ENCODE measurements at regions of chr1 and their contacts with region 1.

Region 1: GRCh38 chr1:219173758-219174588 is at the start of gene LYPLAL1:
- DNase-seq: peak; percentile 96
- total RNA-seq, gene LYPLAL1: 99.4 TPM

Region 2: DNA sequence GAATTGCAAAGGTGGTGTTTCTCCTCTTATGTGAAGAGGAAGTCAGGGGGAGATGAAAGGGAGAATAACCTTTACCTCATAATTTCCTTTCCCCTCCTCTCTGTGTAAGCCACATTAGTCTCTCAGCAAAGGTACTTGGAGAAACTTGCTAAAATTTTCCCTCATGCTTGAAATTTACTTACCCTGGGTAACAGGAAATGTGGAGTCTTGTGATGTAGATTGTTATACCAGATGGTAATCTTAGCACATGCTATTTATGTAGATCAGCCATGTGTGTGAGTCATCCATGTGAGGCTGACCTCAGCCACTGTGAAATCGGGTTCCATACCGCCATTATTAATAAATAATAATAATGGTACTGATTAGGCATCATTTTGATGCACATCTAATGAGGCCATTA is 700.5 kb before region 1 on chr1:
- intact Hi-C with region 1: loop called (anchors 10 kb)
- DNase-seq: no peak

Region 3: DNA sequence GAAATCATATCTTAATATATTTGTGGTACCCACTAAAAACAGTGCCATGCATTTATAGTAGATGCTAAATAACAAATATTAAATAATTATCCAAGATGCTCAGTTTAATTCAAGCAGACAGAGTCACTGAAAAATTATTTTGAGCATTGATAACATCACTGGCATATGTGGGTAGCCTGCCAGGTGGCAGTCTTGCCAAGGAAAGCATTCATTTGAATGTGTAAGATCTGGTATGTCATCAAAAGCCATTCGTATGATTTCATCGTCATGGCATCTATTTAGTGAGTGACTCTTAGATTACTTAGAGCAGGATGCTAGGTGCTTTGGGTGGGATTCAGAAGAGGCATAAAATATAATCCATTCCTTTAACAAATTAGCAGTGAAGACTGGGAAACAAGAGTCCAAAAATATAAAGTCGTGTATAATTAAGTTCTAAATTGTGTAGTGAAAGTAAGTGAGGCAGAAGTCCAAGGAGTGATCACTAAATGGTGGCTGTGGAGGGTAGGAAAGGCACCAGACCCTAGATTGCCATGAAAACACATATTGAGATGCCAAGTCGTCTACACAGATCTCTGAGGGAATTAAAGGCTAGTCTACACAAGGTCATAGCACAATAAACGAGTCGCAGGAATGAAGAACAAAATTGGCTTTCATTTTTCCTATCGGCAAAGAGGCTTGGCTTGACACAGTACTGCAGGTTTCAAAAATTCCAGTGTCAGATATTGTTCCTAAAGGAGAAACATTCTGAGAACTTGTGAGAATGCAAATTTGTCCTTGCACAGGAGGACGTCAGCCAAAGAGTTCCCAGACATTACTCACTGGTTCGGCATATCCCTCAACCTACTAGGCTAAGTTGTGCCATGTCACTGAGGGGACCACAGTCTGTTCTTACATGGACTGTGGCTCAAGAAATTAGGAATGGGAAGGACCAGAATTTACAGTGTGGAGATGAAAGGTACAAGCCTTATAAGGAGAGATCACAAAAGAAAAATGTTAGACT is 130.6 kb after region 1 on chr1:
- intact Hi-C with region 1: loop called (anchors 5 kb)
- DNase-seq: no peak

Region 4: DNA sequence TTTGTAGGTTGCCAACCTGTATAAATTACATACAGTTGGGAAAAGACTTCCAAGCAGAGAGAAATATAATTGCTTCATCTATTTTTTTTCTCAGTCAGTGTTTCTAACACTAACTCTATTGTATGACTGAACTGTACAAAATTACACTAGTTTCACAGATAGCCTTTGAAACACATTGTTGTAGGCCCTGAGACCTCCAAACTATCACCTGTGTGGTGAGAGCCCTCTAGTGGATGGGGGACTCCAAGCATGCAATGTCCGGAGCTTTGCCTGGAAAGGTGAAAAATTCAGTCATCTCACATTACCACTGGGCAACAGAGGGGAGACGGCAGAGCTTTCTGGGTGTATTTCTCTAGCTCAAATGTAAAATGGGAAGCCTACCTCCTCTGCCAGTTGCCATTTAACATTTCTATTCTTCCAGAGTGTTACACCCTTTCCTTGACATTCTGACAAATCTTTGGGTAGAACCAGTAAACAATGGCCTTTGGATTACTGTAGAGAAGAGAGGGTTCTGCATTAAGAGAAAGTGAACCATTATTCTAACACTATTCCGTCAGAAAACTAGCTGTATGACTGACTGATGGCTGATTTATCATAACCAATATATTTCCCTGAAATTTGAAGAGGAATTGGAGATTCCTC is 211.9 kb after region 1 on chr1:
- intact Hi-C with region 1: no loop called
- DNase-seq: no peak